Colonic mucosa (tissue), 4 donors: ENCODE measurements at regions of chr11 and their contacts with region 1.

Region 1: DNA sequence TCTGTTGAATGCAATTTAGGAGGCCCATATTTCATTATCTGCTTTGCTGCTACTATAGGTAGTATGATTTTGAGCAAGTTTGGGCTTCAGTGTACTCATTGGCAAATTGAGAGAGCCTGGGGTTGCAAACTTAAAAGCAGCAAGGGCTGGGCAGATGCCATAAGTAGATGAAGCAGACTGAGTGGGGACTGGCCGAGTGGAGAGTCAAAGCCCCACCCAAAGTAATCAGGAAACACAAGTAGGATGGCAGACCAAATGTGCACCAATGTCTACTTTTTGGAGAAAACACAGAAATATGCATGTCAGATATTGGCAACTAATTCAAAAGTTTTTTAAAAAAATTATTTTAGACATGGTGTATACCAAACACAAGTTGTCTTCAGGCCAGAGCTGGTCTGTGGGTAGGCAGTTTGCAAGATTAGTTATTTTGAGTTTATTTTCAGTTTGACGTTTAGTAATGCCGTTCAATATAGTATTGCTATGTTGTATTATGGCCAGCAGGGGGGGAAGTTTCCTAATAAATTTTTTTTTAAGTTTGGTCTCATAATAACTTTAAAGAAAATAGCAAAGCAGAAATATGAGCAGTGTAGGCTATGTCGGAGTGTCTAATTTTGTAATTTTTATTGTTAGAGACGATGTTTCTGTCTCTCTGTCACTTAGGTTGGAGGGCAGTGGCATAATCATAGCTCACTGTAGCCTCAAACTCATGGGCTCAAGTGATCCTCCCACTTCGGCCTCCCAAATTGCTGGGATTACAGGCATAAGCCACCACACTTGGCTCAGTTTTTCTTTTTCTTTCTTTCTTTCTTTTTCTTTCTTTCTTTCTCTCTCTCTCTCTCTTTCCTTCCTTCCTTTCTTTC is 105.1 kb downstream of the HIPK3 start:
- DNase-seq: no peak
- H3K4me3 ChIP-seq: no peak overlapping the region
- H3K27ac ChIP-seq: no peak overlapping the region
- H3K4me1 ChIP-seq: no peaks in the 10 kb centered on the region
- H3K27me3 ChIP-seq: no peaks in the 10 kb centered on the region
- CTCF ChIP-seq: peak; percentile 53

Region 2: DNA sequence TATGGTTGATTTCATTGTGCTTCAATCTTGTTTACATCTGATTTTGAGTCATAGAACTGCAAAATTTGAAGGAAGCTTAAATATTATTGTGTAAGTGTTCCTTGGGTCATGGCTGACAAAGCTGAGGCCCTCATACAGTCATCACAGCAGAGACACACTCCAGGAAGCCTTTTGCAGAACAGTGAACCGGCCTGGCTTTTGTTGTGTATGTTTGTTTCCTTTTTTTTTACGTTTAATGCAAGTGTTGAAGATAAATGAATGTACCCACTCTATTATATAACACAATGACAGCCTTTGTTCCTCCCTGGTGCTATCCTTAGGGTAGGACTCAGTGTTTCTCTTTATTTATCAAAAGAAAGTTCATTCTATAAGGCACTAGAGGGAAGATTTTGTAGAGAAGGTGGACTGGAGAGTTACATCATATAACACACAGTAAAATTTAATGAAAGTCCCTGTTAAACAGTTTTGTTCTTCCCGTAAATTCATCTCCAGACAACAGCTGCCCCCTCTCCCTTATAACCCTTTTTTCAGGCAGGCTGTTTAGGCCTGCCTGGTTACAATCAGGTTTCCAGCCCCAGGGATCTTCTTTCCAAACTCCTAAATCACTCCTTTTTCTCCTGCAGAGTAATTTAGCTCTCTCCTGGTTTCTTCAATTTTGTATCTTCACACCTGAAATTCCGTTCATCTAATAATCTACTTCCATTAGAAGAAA is 166.7 kb before region 1 on chr11:
- intact Hi-C with region 1: no loop called
- DNase-seq: no peak
- H3K4me3 ChIP-seq: no peak overlapping the region
- H3K27ac ChIP-seq: no peak overlapping the region
- H3K4me1 ChIP-seq: no peaks in the 10 kb centered on the region
- H3K27me3 ChIP-seq: no peaks in the 10 kb centered on the region
- CTCF ChIP-seq: no peak

Region 3: GRCh38 chr11:33234397-33235190 is 127.7 kb before region 1 on chr11:
- intact Hi-C with region 1: no loop called
- DNase-seq: no peak
- H3K4me3 ChIP-seq: no peak overlapping the region
- H3K27ac ChIP-seq: no peak overlapping the region
- H3K4me1 ChIP-seq: no peaks in the 10 kb centered on the region
- H3K27me3 ChIP-seq: no peaks in the 10 kb centered on the region
- CTCF ChIP-seq: no peak

Region 4: GRCh38 chr11:33687733-33688479 is 325.6 kb after region 1 on chr11:
- intact Hi-C with region 1: loop called (anchors 2 kb)
- DNase-seq: peak; percentile 60
- H3K4me3 ChIP-seq: no peak overlapping the region
- H3K27ac ChIP-seq: no peak overlapping the region
- H3K4me1 ChIP-seq: peaks cover 12% of the 10 kb centered on the region
- H3K27me3 ChIP-seq: no peaks in the 10 kb centered on the region
- CTCF ChIP-seq: peak; percentile 60

Region 5: GRCh38 chr11:33747979-33748378 is 385.7 kb after region 1 on chr11:
- intact Hi-C with region 1: loop called (anchors 5 kb)
- DNase-seq: no peak
- H3K4me3 ChIP-seq: no peak overlapping the region
- H3K27ac ChIP-seq: no peak overlapping the region
- H3K4me1 ChIP-seq: no peaks in the 10 kb centered on the region
- H3K27me3 ChIP-seq: no peaks in the 10 kb centered on the region
- CTCF ChIP-seq: no peak

Region 6: DNA sequence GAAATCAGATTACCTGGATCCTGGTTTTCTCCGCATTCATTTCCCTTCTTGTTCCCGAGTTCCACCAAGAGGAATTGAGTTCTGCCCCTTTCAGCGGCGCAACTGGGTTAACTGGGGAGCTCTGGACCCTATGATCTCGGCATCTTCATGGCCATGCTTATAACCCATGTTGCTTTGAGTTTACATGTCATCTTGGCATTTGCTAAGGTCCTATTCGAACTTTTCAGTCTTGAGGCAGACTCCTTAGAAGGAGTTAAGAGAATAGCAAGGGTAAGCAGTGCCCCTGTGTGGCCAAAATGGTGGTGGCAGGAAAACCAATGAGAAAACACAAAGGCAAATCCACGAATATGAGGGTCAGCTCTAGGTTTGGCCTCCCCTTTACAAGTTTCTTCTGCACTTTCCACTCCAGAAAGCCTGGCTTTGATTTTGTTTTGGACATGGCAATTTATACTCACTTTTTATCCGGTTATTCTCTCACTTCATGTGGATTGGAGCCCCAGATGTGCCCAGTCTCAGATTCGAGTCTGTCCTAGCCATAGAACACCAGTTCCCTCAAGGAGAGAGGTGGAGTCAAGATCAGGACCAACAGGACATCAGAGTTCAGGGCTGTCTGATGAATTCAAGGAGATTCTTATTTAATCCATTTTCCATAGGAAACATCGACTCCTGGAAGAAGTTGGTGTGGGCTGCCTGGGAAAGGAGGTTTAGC is 467.3 kb after region 1 on chr11:
- intact Hi-C with region 1: loop called (anchors 5 kb)
- DNase-seq: peak; percentile 68
- H3K4me3 ChIP-seq: peak overlapping the region; percentile 27
- H3K27ac ChIP-seq: no peak overlapping the region
- H3K4me1 ChIP-seq: no peaks in the 10 kb centered on the region
- H3K27me3 ChIP-seq: peaks cover 22% of the 10 kb centered on the region
- CTCF ChIP-seq: peak; percentile 61